ENCODE measurements at regions of chr2 and their contacts with region 1.

Region 1: GRCh38 chr2:69306822-69307578 is 80.0 kb downstream of the GFPT1 start:
- DNase-seq: peak; percentile 93
- H3K4me3 ChIP-seq: peak overlapping the region; percentile 25 to 78 (median 52)
- H3K27ac ChIP-seq: peak overlapping the region; percentile 27 to 82 (median 70)
- H3K4me1 ChIP-seq: peaks cover 11 to 41% (median 25%) of the 10 kb centered on the region in 6 donors
- H3K27me3 ChIP-seq: peaks cover 0 to 40% (median 15%) of the 10 kb centered on the region in 7 donors
- CTCF ChIP-seq: peak; percentile 60 to 88 (median 84)
- POLR2A ChIP-seq: no peak

Region 2: DNA sequence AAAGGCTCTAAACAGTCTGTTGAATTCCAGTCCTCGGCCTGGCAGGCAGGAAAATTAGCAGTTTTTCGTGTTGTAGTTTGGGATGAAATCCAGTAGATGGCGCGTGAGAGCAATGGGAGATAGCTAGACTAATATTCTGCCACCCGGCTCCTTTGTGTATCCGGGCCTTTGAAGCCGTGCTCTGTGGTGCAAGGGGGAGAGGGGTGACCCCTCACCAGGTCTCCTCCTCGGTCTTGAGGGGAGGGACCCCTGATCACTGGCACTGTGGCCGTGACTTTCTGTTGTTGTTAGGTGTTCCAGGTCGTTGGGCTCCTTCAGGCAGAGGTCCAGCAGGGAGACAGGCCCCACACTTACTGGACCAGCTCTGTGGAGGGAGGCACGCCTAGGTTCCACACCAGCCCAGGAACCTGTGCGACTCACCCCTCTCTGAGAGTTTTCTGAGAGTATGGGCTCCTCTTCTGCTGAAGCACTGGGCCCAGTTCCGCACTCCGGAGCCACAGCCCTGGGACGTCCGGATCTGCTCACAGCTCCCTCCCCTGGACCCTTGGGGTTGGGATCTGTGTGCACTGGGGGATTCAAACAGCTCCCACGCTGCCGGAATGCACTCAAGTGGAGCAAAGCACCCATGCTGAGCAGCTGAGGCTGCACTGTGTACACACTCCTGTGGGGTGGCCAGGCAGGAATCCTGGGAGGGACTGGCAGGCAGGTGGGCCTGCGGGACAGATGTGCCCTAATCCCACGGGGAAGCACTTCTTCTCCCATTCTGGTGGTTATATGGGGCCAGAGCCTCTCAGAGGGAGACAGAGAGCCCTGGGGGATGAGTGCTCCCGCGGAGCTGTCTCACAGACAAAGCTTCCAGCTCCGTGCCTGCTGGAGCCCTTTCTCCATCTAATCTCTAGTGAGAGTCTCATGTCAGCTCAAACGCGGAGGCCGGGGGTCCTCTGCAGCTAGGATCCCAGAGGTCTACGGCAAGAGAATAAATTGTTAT is 363.1 kb before region 1 on chr2:
- intact Hi-C with region 1: loop called (anchors 10 kb)
- DNase-seq: no peak
- H3K4me3 ChIP-seq: no peak overlapping the region
- H3K27ac ChIP-seq: no peak overlapping the region
- H3K4me1 ChIP-seq: peaks cover 0 to 7% (median 2%) of the 10 kb centered on the region in 6 donors
- H3K27me3 ChIP-seq: peaks cover 0 to 23% (median 0%) of the 10 kb centered on the region in 7 donors
- CTCF ChIP-seq: peak; percentile 39 to 84 (median 68)
- POLR2A ChIP-seq: no peak

Region 3: DNA sequence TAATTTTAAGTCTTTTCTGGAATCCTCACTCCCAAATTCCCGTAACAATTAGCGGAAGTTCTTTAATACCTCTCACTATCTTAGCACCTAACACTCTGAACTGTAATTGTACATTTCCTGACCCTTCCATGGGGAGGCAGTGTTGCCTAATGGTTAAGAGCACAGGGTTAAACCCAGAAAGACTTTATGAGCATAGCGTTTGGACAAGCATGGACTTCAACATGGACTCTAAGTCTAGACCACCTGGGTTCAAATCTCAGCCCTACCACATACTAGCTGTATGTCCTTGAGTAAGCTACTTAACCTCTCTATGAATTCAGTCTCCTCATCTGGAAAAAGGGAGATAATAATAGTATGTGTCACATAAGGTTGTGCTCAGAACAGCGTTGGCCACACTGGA is 281.0 kb before region 1 on chr2:
- intact Hi-C with region 1: loop called (anchors 5 kb)
- DNase-seq: no peak
- H3K4me3 ChIP-seq: no peak overlapping the region
- H3K27ac ChIP-seq: no peak overlapping the region
- H3K4me1 ChIP-seq: peaks cover 0 to 9% (median 0%) of the 10 kb centered on the region in 6 donors
- H3K27me3 ChIP-seq: peaks cover 0 to 34% (median 0%) of the 10 kb centered on the region in 7 donors
- CTCF ChIP-seq: peak in 10 of 11 experiments; percentile 28 to 73 (median 56)
- POLR2A ChIP-seq: no peak

Region 4: DNA sequence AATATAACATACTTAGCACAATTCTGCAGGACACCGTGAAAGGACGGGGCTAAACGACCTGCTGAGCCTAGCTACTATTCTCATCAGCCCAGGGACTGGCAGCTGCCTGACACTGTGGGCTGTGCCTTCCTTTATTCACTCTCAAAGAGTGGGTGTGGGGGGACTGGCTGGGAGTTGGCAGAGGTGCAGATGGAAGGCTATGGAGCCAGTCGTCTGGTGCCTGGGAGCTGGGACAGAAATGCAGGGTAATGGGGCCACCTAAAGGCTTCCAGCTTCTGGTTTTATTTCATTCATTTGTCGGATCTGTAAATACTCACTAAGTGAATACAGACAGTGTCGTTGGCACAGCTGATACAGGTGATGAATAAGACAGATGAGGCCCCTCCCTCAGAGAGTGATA is 186.3 kb after region 1 on chr2:
- intact Hi-C with region 1: no loop called
- DNase-seq: no peak
- H3K4me3 ChIP-seq: no peak overlapping the region
- H3K27ac ChIP-seq: no peak overlapping the region
- H3K4me1 ChIP-seq: peaks cover 0 to 9% (median 0%) of the 10 kb centered on the region in 6 donors
- H3K27me3 ChIP-seq: no peaks in the 10 kb centered on the region
- CTCF ChIP-seq: no peak
- POLR2A ChIP-seq: no peak

Region 5: DNA sequence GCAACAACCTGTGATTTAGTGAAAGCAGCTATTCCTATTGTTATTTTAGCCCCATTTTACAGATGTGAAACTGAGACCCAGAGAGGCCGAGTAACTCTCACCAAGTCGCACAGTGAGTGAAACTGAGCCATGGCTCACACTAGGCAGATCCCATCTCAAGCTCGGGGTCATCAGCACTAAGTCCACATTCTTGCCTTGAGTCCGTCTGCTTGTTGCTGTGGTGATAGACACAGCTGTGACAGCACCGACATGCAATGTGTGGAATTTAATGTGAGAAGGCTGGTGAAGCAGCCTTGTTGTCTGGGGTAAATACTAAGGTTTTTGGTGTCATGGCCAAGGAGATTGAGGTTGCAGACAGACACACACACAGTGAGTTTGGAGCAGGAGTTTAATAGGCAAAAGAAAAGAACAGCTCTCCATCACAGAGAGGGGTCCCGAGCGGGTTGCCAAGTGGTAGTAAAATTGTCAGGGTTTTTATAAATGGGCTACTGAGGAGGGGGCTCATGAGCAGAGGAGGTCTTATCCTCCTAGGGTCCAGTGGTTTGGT is 482.2 kb after region 1 on chr2:
- intact Hi-C with region 1: no loop called
- DNase-seq: no peak
- H3K4me3 ChIP-seq: no peak overlapping the region
- H3K27ac ChIP-seq: peak overlapping the region in 4 of 8 donors; percentile 12 to 59 (median 18)
- H3K4me1 ChIP-seq: peaks cover 0 to 28% (median 16%) of the 10 kb centered on the region in 6 donors
- H3K27me3 ChIP-seq: no peaks in the 10 kb centered on the region
- CTCF ChIP-seq: no peak
- POLR2A ChIP-seq: no peak